Activated CD4-positive, alpha-beta T cell treated with anti-CD3 and anti-CD28 coated beads for 36 hours (primary cell): ENCODE measurements at regions of chr12 and their contacts with region 1.

Region 1: DNA sequence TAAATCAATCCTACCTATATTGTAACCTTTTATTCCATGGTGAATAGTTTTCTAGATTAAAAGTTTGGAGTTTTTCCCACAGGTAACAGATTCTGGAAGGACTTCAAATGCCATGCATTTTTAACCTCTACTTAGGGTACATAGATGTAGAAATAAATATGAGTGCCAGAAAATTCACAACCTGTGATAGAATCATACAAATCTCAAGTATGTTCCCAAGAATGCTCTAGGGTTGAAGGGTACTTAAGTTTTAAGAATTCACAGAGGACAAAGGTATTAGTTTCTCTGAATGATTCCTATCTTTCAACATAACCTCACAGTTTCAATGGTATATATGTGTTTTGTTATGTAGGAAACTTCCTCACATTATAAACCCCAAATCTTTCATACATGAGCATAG is 511.3 kb downstream of the TMEM117 start:
- DNase-seq: no peak
- ATAC-seq: no peak
- H3K4me3 Mint-ChIP-seq: no peak overlapping the region
- H3K27ac Mint-ChIP-seq: no peak overlapping the region
- H3K4me1 Mint-ChIP-seq: no peaks in the 10 kb centered on the region
- H3K27me3 Mint-ChIP-seq: no peaks in the 10 kb centered on the region

Region 2: DNA sequence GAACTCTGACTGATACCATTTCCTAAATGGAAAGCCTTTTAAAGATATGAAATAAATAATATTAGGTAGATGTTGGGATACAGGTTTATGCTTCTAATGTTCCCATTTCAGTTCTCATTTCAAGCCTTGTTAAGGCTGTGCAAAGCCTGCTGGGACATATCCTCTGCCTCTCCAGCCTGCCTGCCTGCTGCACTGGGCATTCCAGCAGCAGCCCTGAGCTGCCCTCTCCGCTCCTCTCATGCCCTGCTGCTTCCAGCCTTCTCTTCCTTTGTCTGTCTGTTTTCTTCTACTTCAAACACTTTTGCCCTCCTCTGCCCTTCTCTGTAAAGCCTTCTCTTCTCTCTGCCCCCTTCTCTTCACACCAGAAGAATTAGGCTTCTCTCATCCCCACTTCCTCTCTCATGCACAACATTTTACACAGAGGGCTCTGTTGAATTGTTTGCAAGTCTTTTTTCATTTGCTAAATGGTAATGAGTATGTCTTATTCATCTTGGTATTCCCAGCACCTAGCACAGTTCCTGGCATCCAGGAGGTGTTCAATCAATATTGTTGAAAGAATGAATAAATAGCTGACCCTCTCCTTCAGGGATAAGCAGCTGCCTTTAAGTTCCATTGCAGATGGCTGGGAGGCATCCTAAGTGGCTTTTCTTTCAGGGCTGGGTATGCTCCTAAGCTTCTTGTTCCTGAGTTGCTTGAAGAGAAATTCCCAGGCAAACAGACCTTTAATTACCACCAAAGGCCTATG is 219.0 kb before region 1 on chr12:
- CTCF ChIA-PET with region 1: no interaction called
- POLR2A ChIA-PET with region 1: no interaction called
- intact Hi-C with region 1: no loop called
- DNase-seq: no peak
- ATAC-seq: no peak
- H3K4me3 Mint-ChIP-seq: no peak overlapping the region
- H3K27ac Mint-ChIP-seq: no peak overlapping the region
- H3K4me1 Mint-ChIP-seq: no peaks in the 10 kb centered on the region
- H3K27me3 Mint-ChIP-seq: no peaks in the 10 kb centered on the region

Region 3: GRCh38 chr12:44260581-44260980 is 86.6 kb before region 1 on chr12:
- CTCF ChIA-PET with region 1: no interaction called
- POLR2A ChIA-PET with region 1: no interaction called
- intact Hi-C with region 1: loop called in 1 of 2 experiments (anchors 5 kb)
- DNase-seq: no peak
- ATAC-seq: no peak
- H3K4me3 Mint-ChIP-seq: no peak overlapping the region
- H3K27ac Mint-ChIP-seq: no peak overlapping the region
- H3K4me1 Mint-ChIP-seq: no peaks in the 10 kb centered on the region
- H3K27me3 Mint-ChIP-seq: no peaks in the 10 kb centered on the region

Region 4: GRCh38 chr12:44286336-44286735 is 60.8 kb before region 1 on chr12:
- CTCF ChIA-PET with region 1: no interaction called
- POLR2A ChIA-PET with region 1: no interaction called
- intact Hi-C with region 1: no loop called
- DNase-seq: no peak
- ATAC-seq: peak; percentile 63
- H3K4me3 Mint-ChIP-seq: no peak overlapping the region
- H3K27ac Mint-ChIP-seq: no peak overlapping the region
- H3K4me1 Mint-ChIP-seq: peaks cover 11% of the 10 kb centered on the region
- H3K27me3 Mint-ChIP-seq: no peaks in the 10 kb centered on the region